Spleen (tissue), 13 donors: ENCODE measurements at regions of chr1 and their contacts with region 1.

Region 1: GRCh38 chr1:211830330-211831142 is at the start of gene LPGAT1:
- DNase-seq: peak; percentile 97
- H3K4me3 ChIP-seq: peak within 1 kb of the TSS; percentile 61 to 91 (median 66)
- H3K27ac ChIP-seq: peak within 1 kb of the TSS; percentile 85 to 98 (median 94)
- H3K4me1 ChIP-seq: peaks cover 27 to 77% (median 64%) of the 10 kb centered on the region in 6 donors
- H3K27me3 ChIP-seq: no peaks in the 10 kb centered on the region
- CTCF ChIP-seq: peak in 9 of 11 experiments; percentile 41 to 86 (median 77)
- POLR2A ChIP-seq: no peak
- total RNA-seq, gene LPGAT1: 55.0 to 80.6 (median 71.4) TPM

Region 2: GRCh38 chr1:211698161-211699026 is 132.1 kb before region 1 on chr1:
- intact Hi-C with region 1: loop called (anchors 5 kb)
- DNase-seq: peak; percentile 97
- H3K4me3 ChIP-seq: peak overlapping the region in 5 of 8 donors; percentile 17 to 58 (median 19)
- H3K27ac ChIP-seq: no peak overlapping the region
- H3K4me1 ChIP-seq: peaks cover 16 to 48% (median 42%) of the 10 kb centered on the region in 6 donors
- H3K27me3 ChIP-seq: no peaks in the 10 kb centered on the region
- CTCF ChIP-seq: peak; percentile 87 to 99 (median 95)
- POLR2A ChIP-seq: no peak

Region 3: DNA sequence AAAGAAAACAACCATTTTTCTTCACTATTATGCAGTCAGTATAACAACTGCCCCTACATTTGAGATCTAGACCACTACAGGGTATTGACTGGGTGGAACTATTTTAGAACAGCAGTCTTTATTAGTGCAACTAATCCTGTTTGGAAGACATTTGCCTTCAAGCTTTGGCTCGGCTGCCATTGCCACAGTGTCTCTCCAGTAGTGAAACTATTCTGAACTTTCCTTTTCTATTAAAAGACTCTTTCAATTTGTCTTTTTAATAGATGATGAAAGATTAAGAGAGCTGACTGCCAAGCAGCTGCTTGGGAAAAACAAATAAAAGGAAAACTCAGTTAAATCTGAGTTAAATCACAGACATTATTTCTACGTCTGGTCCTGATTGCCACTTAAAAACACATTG is 49.3 kb before region 1 on chr1:
- intact Hi-C with region 1: no loop called
- DNase-seq: no peak
- H3K4me3 ChIP-seq: no peak overlapping the region
- H3K27ac ChIP-seq: peak overlapping the region in 3 of 8 donors; percentile 14 to 44 (median 29)
- H3K4me1 ChIP-seq: peaks cover 0 to 15% (median 6%) of the 10 kb centered on the region in 6 donors
- H3K27me3 ChIP-seq: no peaks in the 10 kb centered on the region
- CTCF ChIP-seq: no peak
- POLR2A ChIP-seq: no peak

Region 4: DNA sequence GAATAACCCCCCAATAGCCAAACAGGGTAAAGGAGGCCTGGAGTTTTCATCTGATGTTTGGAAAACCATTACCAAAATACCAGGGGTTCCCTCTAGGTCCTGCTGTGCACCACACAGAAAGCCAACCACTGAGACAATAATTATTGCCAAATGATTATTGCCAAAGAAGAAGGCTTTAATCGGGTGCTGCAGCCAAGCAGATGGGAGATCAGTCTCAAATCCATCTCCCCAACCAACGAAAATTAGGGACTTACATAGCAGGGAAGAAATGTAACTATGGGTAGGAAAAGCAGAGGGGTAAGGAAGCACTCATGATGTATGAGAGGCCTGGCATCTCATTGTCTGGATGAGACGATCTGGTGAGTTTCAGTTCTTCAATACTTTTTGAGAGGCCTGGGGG is 28.9 kb after region 1 on chr1:
- intact Hi-C with region 1: no loop called
- DNase-seq: no peak
- H3K4me3 ChIP-seq: no peak overlapping the region
- H3K27ac ChIP-seq: no peak overlapping the region
- H3K4me1 ChIP-seq: no peaks in the 10 kb centered on the region
- H3K27me3 ChIP-seq: no peaks in the 10 kb centered on the region
- CTCF ChIP-seq: no peak
- POLR2A ChIP-seq: no peak

Region 5: GRCh38 chr1:211896958-211897357 is 66.4 kb after region 1 on chr1:
- intact Hi-C with region 1: no loop called
- DNase-seq: no peak
- H3K4me3 ChIP-seq: no peak overlapping the region
- H3K27ac ChIP-seq: no peak overlapping the region
- H3K4me1 ChIP-seq: no peaks in the 10 kb centered on the region
- H3K27me3 ChIP-seq: no peaks in the 10 kb centered on the region
- CTCF ChIP-seq: no peak
- POLR2A ChIP-seq: no peak

Region 6: GRCh38 chr1:212035123-212035834 is 204.7 kb after region 1 on chr1 and contains the starts of genes DTL and INTS7:
- intact Hi-C with region 1: loop called (anchors 10 kb)
- DNase-seq: peak; percentile 99
- H3K4me3 ChIP-seq: peak within 1 kb of the TSS; percentile 47 to 77 (median 65)
- H3K27ac ChIP-seq: peak within 1 kb of the TSS; percentile 83 to 93 (median 90)
- H3K4me1 ChIP-seq: peaks cover 18 to 70% (median 49%) of the 10 kb centered on the region in 6 donors
- H3K27me3 ChIP-seq: no peaks in the 10 kb centered on the region
- CTCF ChIP-seq: peak; percentile 88 to 97 (median 94)
- POLR2A ChIP-seq: no peak
- total RNA-seq, gene DTL: 5.8 to 15.7 (median 12.5) TPM
- total RNA-seq, gene INTS7: 11.1 to 16.5 (median 14.8) TPM